Mammary epithelial cell (primary cell): ENCODE measurements at regions of chr1 and their contacts with region 1.

Region 1: DNA sequence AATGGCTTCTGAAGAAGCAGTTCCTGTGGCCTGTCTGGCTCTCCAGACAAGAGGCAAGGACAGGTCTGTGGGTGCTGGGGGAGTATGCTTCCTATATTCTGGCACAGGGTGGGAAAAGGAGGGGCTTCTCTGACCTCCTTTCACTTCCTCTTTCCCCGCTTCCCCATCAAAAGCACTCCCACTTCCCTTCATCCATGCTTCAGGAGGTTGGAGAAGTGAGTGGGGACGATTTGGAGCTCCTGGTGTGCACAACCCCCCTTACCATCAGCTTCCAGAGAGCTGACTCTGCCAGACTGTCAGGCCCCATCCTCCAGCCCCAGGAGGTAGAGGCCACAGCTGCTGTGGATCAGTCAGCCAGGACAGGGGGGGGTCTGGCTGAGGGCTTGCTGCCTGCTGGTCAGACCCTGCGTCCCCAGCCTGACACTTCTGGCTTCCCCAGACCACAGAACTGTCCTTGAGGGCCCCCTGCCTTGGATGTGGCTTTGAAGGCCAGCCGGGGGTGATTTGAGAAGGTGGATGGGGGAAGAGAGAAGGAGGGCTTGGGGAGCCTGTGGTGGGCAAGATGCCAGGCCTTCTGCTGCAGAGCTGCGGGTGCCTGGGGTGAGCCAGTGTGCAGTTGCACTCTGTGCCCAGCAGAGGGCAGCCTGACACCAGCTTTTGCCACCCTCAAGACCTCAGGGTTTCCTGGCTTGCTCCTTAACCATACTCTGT is 21.5 kb upstream of the TMEM222 start:
- DNase-seq: peak; percentile 73
- H3K4me3 ChIP-seq: no peak overlapping the region
- H3K27ac ChIP-seq: peak overlapping the region; percentile 86
- H3K4me1 ChIP-seq: peaks cover 28% of the 10 kb centered on the region
- H3K27me3 ChIP-seq: no peaks in the 10 kb centered on the region
- CTCF ChIP-seq: peak; percentile 96 to 98

Region 2: GRCh38 chr1:27314169-27314568 is 13.7 kb after region 1 on chr1:
- CTCF ChIA-PET with region 1: interaction called, 11 read pairs
- dilution Hi-C with region 1: no loop called
- in situ Hi-C with region 1: no loop called
- intact Hi-C with region 1: no loop called
- DNase-seq: no peak
- H3K4me3 ChIP-seq: no peak overlapping the region
- H3K27ac ChIP-seq: no peak overlapping the region
- H3K4me1 ChIP-seq: no peaks in the 10 kb centered on the region
- H3K27me3 ChIP-seq: no peaks in the 10 kb centered on the region
- CTCF ChIP-seq: no peak

Region 3: DNA sequence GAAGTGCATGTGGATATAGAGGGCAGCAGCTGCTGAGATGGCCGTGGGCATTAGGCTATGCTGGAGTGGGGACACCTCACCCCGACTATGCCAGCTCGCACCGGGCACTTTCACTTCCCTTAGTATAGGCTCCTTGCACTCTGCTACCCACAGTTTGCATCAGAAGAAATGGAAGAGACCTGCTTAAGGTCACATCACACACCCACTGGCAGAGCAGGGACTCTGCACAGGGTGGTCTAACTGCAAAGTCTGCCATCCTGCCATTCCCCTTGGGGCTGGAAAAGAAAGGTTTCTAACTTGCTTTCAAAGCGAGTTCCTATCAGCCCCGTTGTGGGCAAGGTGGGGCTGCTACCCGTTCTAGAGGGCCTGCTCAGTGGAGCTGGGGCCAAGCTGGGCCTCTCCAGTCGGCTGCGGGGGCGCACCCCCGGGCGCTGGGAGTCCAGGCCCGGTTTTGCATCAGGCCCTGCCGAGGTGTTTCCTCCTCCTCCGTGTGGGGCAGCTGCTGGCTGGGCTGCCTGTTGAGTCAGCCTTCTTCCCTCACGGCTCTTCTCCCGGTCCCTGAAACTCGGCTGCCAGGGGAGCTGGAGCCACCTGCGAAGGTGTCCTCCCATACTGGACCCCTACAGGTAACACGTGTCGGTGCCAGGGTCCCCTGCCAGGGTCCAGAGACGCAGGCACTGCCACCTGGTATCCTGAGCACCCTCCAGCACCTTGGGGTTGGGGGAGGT is 41.2 kb after region 1 on chr1 and contains the start of gene SYTL1:
- CTCF ChIA-PET with region 1: interaction called, 3 read pairs
- dilution Hi-C with region 1: no loop called
- in situ Hi-C with region 1: no loop called
- intact Hi-C with region 1: loop called (anchors 2 kb)
- DNase-seq: peak; percentile 86
- H3K4me3 ChIP-seq: peak within 1 kb of the TSS; percentile 79 to 90 (median 83)
- H3K27ac ChIP-seq: peak within 1 kb of the TSS; percentile 86
- H3K4me1 ChIP-seq: peaks cover 32% of the 10 kb centered on the region
- H3K27me3 ChIP-seq: no peaks in the 10 kb centered on the region
- CTCF ChIP-seq: no peak
- total RNA-seq, gene SYTL1: 63.3 to 91.8 TPM

Region 4: GRCh38 chr1:27365372-27366112 is 65.0 kb after region 1 on chr1:
- CTCF ChIA-PET with region 1: interaction called, 17 read pairs
- dilution Hi-C with region 1: no loop called
- in situ Hi-C with region 1: no loop called
- intact Hi-C with region 1: loop called (anchors 1 kb)
- DNase-seq: peak; percentile 89
- H3K4me3 ChIP-seq: peak overlapping the region; percentile 68 to 86 (median 85)
- H3K27ac ChIP-seq: peak overlapping the region; percentile 90
- H3K4me1 ChIP-seq: peaks cover 18% of the 10 kb centered on the region
- H3K27me3 ChIP-seq: no peaks in the 10 kb centered on the region
- CTCF ChIP-seq: no peak

Region 5: DNA sequence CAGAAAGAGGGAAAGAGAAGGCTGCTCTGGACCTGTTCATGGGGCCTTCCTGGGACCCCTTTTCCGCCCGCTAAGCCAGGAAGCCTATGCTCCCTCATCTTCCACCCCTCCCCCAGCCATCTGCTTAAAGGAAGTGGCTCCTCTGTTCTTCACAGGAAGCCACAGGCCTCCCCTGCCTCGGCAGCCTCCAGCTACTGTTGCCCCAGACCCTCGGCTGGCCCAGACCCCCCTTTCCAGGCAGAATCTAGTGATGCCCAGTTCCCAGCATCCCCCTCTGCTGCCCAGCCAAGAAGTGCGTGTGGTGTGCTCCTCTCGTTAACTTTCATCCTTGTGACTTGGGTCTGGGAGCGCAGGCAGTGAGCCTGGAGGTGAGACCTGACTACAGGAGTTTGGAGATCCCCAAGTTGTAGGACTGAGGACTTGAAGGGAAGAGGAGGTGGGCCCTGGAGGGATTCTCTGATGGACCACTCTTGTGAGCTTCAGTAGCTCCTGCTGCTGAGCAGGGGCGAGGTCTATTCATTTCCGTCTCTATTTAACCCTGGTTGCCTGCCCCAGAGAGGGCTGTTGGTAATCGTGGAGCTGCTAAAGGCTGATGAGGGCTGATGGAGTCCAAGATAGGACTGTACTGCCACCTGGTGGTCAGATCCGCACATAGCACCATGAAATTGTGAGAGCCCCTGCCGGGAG is 362.4 kb after region 1 on chr1:
- CTCF ChIA-PET with region 1: no interaction called
- dilution Hi-C with region 1: no loop called
- in situ Hi-C with region 1: no loop called
- intact Hi-C with region 1: loop called (anchors 1 kb)
- DNase-seq: peak; percentile 62
- H3K4me3 ChIP-seq: no peak overlapping the region
- H3K27ac ChIP-seq: no peak overlapping the region
- H3K4me1 ChIP-seq: peaks cover 14% of the 10 kb centered on the region
- H3K27me3 ChIP-seq: no peaks in the 10 kb centered on the region
- CTCF ChIP-seq: peak; percentile 81